ENCODE measurements at regions of chr1 and their contacts with region 1.

Region 1: GRCh38 chr1:45569962-45570581 is 13.8 kb upstream of the NASP start:
- DNase-seq: peak; percentile 78
- ATAC-seq: peak; percentile 98
- H3K4me3 ChIP-seq: no peak overlapping the region
- H3K27ac ChIP-seq: no peak overlapping the region
- H3K4me1 ChIP-seq: no peaks in the 10 kb centered on the region
- H3K27me3 ChIP-seq: no peaks in the 10 kb centered on the region
- CTCF ChIP-seq: peak; percentile 97
- POLR2A ChIP-seq: peak; percentile 42; the same call in 1 of the 2 replicates
- RAD21 ChIP-seq: peak; percentile 96

Region 2: DNA sequence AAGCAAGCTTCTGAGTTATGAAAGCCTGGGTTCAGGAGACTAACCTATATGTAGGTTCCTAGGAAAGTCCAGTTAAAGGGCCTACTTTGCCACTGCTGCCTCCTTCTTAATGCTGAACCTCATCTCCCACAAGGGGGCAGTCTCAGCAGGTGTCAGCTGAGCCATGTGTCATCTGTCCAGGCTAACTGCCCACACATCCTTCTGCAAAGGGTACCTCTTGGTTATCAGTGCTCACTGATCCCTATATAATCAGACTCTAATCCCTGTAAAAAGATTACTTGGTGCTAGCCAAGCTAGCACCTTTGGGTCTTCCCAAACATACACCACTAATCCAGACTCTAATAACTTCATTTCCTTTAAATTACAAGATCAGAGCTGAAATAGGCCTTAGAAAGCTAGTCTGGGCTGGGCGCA is 57.4 kb before region 1 on chr1:
- CTCF ChIA-PET with region 1: interaction called, 3 read pairs
- POLR2A ChIA-PET with region 1: no interaction called
- dilution Hi-C with region 1: no loop called
- in situ Hi-C with region 1: loop called (anchors 5 kb)
- intact Hi-C with region 1: loop called (anchors 1 kb)
- DNase-seq: peak; percentile 71
- ATAC-seq: peak; percentile 58
- H3K4me3 ChIP-seq: no peak overlapping the region
- H3K27ac ChIP-seq: no peak overlapping the region
- H3K4me1 ChIP-seq: peaks cover 17% of the 10 kb centered on the region
- H3K27me3 ChIP-seq: no peaks in the 10 kb centered on the region
- CTCF ChIP-seq: peak; percentile 64
- POLR2A ChIP-seq: no peak
- RAD21 ChIP-seq: peak; percentile 64

Region 3: GRCh38 chr1:45589861-45590260 is 19.8 kb after region 1 on chr1:
- CTCF ChIA-PET with region 1: no interaction called
- POLR2A ChIA-PET with region 1: no interaction called
- dilution Hi-C with region 1: no loop called
- in situ Hi-C with region 1: no loop called
- intact Hi-C with region 1: no loop called
- DNase-seq: no peak
- ATAC-seq: no peak
- H3K4me3 ChIP-seq: no peak overlapping the region
- H3K27ac ChIP-seq: no peak overlapping the region
- H3K4me1 ChIP-seq: no peaks in the 10 kb centered on the region; the same call in none of the 2 replicates
- H3K27me3 ChIP-seq: no peaks in the 10 kb centered on the region
- CTCF ChIP-seq: no peak
- POLR2A ChIP-seq: no peak
- RAD21 ChIP-seq: no peak

Region 4: GRCh38 chr1:45913183-45913683 is 343.2 kb after region 1 on chr1:
- CTCF ChIA-PET with region 1: no interaction called
- POLR2A ChIA-PET with region 1: no interaction called
- dilution Hi-C with region 1: no loop called
- in situ Hi-C with region 1: no loop called
- intact Hi-C with region 1: no loop called
- DNase-seq: peak; percentile 96
- ATAC-seq: peak; percentile 95
- H3K4me3 ChIP-seq: no peak overlapping the region
- H3K27ac ChIP-seq: peak overlapping the region; percentile 9; the same call in 1 of the 2 replicates
- H3K4me1 ChIP-seq: peaks cover 10% of the 10 kb centered on the region
- H3K27me3 ChIP-seq: no peaks in the 10 kb centered on the region
- CTCF ChIP-seq: no peak
- POLR2A ChIP-seq: no peak
- RAD21 ChIP-seq: peak; percentile 22